GM12878 (cell line): ENCODE measurements at regions of chr5 and their contacts with region 1.

Region 1: GRCh38 chr5:32076699-32077695 is 97.1 kb downstream of the GOLPH3 start:
- DNase-seq: peak; percentile 15
- ATAC-seq: peak; percentile 80
- H3K4me3 ChIP-seq: no peak overlapping the region
- H3K27ac ChIP-seq: no peak overlapping the region
- H3K4me1 ChIP-seq: no peaks in the 10 kb centered on the region
- H3K27me3 ChIP-seq: peaks cover 0 to 2% of the 10 kb centered on the region in 2 experiments; a peak in 1 of 4 replicates
- CTCF ChIP-seq: peak; percentile 64 to 80 (median 69)
- EP300 ChIP-seq: no peak
- POLR2A ChIP-seq: no peak
- RAD21 ChIP-seq: peak; percentile 96

Region 2: GRCh38 chr5:31581498-31582099 is 495.4 kb before region 1 on chr5:
- CTCF ChIA-PET with region 1: interaction called, 7 read pairs
- POLR2A ChIA-PET with region 1: no interaction called
- RAD21 ChIA-PET with region 1: no interaction called
- SMC1A ChIA-PET with region 1: interaction called, 5 read pairs
- in situ Hi-C with region 1: no loop called
- intact Hi-C with region 1: loop called (anchors 1 kb)
- DNase-seq: no peak
- ATAC-seq: no peak
- H3K4me3 ChIP-seq: no peak overlapping the region
- H3K27ac ChIP-seq: no peak overlapping the region
- H3K4me1 ChIP-seq: no peaks in the 10 kb centered on the region
- H3K27me3 ChIP-seq: no peaks in the 10 kb centered on the region
- CTCF ChIP-seq: peak; percentile 18 to 54 (median 34); a peak in 4 of 6 replicates
- EP300 ChIP-seq: no peak
- POLR2A ChIP-seq: no peak
- RAD21 ChIP-seq: peak; percentile 81

Region 3: DNA sequence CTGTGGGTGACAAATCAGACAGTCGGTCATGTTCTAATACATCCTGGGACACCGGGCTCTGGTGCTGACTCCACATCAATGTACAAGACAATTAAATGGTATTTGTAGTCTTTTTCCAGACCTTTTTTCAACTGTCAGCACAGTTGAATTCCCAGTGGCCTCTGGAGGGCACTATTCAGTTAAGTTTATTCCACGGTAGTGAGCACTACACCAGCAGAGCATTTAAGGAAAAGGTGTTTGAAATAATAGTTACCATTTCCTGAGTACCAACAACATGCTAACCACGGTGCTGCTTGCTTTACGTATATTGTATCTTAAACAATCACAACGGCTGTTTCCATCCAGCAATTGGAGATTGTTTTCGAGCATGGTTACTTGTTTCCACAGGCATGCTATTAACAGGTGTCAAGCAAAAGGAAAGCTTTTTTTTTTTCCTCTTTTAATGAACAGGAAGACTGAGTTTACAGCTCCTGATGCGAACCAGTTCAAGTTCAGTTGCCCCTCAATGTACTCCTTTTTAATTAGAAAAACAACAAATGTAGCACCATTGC is 251.4 kb before region 1 on chr5:
- CTCF ChIA-PET with region 1: interaction called, 17 read pairs
- POLR2A ChIA-PET with region 1: no interaction called
- RAD21 ChIA-PET with region 1: interaction called, 4 read pairs
- SMC1A ChIA-PET with region 1: interaction called, 6 read pairs
- in situ Hi-C with region 1: no loop called
- intact Hi-C with region 1: loop called (anchors 1 kb)
- DNase-seq: peak; percentile 8
- ATAC-seq: peak; percentile 86
- H3K4me3 ChIP-seq: no peak overlapping the region
- H3K27ac ChIP-seq: no peak overlapping the region
- H3K4me1 ChIP-seq: no peaks in the 10 kb centered on the region
- H3K27me3 ChIP-seq: no peaks in the 10 kb centered on the region
- CTCF ChIP-seq: peak; percentile 47 to 65 (median 59); a peak in 5 of 6 replicates
- EP300 ChIP-seq: no peak
- POLR2A ChIP-seq: no peak
- RAD21 ChIP-seq: peak; percentile 66

Region 4: DNA sequence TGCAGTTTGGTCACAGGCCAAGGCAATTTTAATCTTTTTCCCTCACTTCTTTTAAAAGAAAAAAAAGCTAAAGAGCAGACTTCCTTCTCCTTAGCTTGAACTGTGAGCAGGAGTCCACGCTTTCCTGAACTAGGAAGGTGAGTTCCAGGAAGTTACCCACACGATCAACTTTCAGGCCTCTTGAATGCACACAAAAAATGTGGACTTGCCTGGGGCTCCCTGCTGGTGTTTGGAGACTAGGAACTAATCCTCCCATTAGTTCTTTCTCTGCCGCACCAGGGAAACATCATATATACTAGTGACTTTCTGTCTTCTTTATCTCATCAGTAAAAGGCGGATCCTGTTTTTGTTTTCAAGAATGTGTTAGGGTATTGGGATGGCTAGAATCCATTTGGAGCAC is 142.8 kb before region 1 on chr5:
- CTCF ChIA-PET with region 1: interaction called, 7 read pairs
- POLR2A ChIA-PET with region 1: no interaction called
- RAD21 ChIA-PET with region 1: interaction called, 4 read pairs
- SMC1A ChIA-PET with region 1: no interaction called
- in situ Hi-C with region 1: no loop called
- intact Hi-C with region 1: loop called (anchors 1 kb)
- DNase-seq: no peak
- ATAC-seq: no peak
- H3K4me3 ChIP-seq: no peak overlapping the region
- H3K27ac ChIP-seq: no peak overlapping the region
- H3K4me1 ChIP-seq: no peaks in the 10 kb centered on the region
- H3K27me3 ChIP-seq: peaks cover 0 to 2% of the 10 kb centered on the region in 2 experiments; a peak in 1 of 4 replicates
- CTCF ChIP-seq: no peak
- EP300 ChIP-seq: no peak
- POLR2A ChIP-seq: no peak
- RAD21 ChIP-seq: no peak

Region 5: GRCh38 chr5:32092938-32093812 is 16.2 kb after region 1 on chr5:
- CTCF ChIA-PET with region 1: interaction called, 15 read pairs
- POLR2A ChIA-PET with region 1: no interaction called
- RAD21 ChIA-PET with region 1: interaction called, 6 read pairs
- SMC1A ChIA-PET with region 1: interaction called, 9 read pairs
- in situ Hi-C with region 1: no loop called
- intact Hi-C with region 1: no loop called
- DNase-seq: peak; percentile 17
- ATAC-seq: peak; percentile 99
- H3K4me3 ChIP-seq: no peak overlapping the region
- H3K27ac ChIP-seq: no peak overlapping the region
- H3K4me1 ChIP-seq: no peaks in the 10 kb centered on the region
- H3K27me3 ChIP-seq: no peaks in the 10 kb centered on the region
- CTCF ChIP-seq: peak; percentile 67 to 83 (median 75)
- EP300 ChIP-seq: no peak
- POLR2A ChIP-seq: no peak
- RAD21 ChIP-seq: peak; percentile 77

Region 6: GRCh38 chr5:32283539-32284377 is 206.8 kb after region 1 on chr5:
- CTCF ChIA-PET with region 1: no interaction called
- POLR2A ChIA-PET with region 1: no interaction called
- RAD21 ChIA-PET with region 1: no interaction called
- SMC1A ChIA-PET with region 1: no interaction called
- in situ Hi-C with region 1: no loop called
- intact Hi-C with region 1: no loop called
- DNase-seq: no peak
- ATAC-seq: peak; percentile 52
- H3K4me3 ChIP-seq: no peak overlapping the region
- H3K27ac ChIP-seq: no peak overlapping the region
- H3K4me1 ChIP-seq: peaks cover 28% of the 10 kb centered on the region
- H3K27me3 ChIP-seq: no peaks in the 10 kb centered on the region
- CTCF ChIP-seq: no peak
- EP300 ChIP-seq: no peak
- POLR2A ChIP-seq: no peak
- RAD21 ChIP-seq: no peak